ENCODE measurements at regions of chr5 and their contacts with region 1.

Region 1: DNA sequence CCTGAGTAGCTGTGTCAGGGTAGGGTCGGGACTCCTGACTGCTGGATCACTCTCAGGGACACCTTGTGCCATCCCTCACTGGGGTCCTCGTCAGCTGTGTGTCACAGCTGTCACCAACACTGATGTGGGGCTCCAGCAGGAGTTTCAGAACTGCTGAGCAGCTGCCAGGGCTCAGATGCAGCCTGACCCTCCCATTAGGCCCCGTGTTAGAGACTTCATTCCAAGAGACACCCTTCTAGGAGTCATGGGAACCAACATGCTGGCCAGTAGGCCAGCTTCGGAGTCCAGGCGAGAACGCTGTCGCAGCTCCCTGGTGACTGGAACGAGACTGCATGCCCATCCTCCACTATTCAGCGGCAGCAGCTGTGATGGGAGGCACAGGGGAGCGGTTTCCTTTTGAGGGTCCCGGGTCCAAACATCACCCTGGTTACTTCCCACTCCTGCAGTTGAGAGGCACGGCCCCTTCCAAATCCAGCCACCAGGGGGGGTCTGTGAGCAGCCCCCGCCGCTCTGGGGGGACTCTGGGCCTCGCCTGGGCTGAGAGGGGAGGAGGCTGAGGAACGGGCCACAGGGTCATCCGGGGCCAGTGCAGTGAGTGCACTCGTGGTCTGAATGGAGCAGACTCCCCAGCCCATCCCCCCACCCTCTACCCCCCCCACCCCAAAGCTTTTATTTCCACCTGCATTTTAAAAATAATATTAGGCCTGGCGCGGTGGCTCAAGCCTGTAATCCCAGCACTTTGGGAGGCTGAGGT is 12.6 kb upstream of the TCF7 start:
- DNase-seq: peak; percentile 46 to 76
- ATAC-seq: peak; percentile 63 to 88 (median 76)
- H3K4me3 ChIP-seq: no peak overlapping the region
- H3K27ac ChIP-seq: no peak overlapping the region
- H3K4me1 ChIP-seq: peaks cover 0 to 45% (median 14%) of the 10 kb centered on the region in 9 donors
- H3K27me3 ChIP-seq: no peaks in the 10 kb centered on the region
- CTCF ChIP-seq: peak; percentile 73 to 92 (median 90)

Region 2: GRCh38 chr5:134140530-134141201 is 38.8 kb after region 1 on chr5:
- intact Hi-C with region 1: loop called in 9 of 10 experiments (anchors 1 to 10 kb)
- DNase-seq: peak in 1 of 2 donors; percentile 57
- ATAC-seq: peak; percentile 50 to 82 (median 74)
- H3K4me3 ChIP-seq: no peak overlapping the region
- H3K27ac ChIP-seq: no peak overlapping the region
- H3K4me1 ChIP-seq: peaks cover 9 to 46% (median 24%) of the 10 kb centered on the region in 9 donors
- H3K27me3 ChIP-seq: no peaks in the 10 kb centered on the region
- CTCF ChIP-seq: peak; percentile 49 to 82 (median 76)

Region 3: GRCh38 chr5:135651150-135651549 is 1549.3 kb after region 1 on chr5:
- intact Hi-C with region 1: loop called in 1 of 10 experiments (anchors 5 kb)
- DNase-seq: no peak
- ATAC-seq: no peak
- H3K4me3 ChIP-seq: no peak overlapping the region
- H3K27ac ChIP-seq: no peak overlapping the region
- H3K4me1 ChIP-seq: no peaks in the 10 kb centered on the region
- H3K27me3 ChIP-seq: peaks cover 0 to 6% (median 0%) of the 10 kb centered on the region in 7 donors
- CTCF ChIP-seq: no peak